H1 (cell line): ENCODE measurements at regions of chr7 and their contacts with region 1.

Region 1: GRCh38 chr7:158885624-158886023 is 29.3 kb downstream of the DYNC2I1 start:
- DNase-seq: no peak
- H3K4me3 ChIP-seq: no peak overlapping the region
- H3K27ac ChIP-seq: no peak overlapping the region
- H3K4me1 ChIP-seq: no peaks in the 10 kb centered on the region
- H3K27me3 ChIP-seq: no peaks in the 10 kb centered on the region
- CTCF ChIP-seq: peak in 1 of 3 experiments; percentile 3; a peak in 2 of 4 replicates
- EP300 ChIP-seq: no peak
- POLR2A ChIP-seq: no peak
- RAD21 ChIP-seq: peak; percentile 32 to 38

Region 2: GRCh38 chr7:158858592-158859503 is 26.8 kb before region 1 on chr7:
- CTCF ChIA-PET with region 1: interaction called, 10 read pairs
- POLR2A ChIA-PET with region 1: no interaction called
- DNase-seq: peak in 1 of 2 experiments; percentile 54
- H3K4me3 ChIP-seq: peak overlapping the region in 2 of 4 experiments; percentile 0 to 49; a peak in 4 of 8 replicates
- H3K27ac ChIP-seq: no peak overlapping the region
- H3K4me1 ChIP-seq: peaks cover 9 to 23% (median 14%) of the 10 kb centered on the region in 4 experiments; a peak in 6 of 7 replicates
- H3K27me3 ChIP-seq: no peaks in the 10 kb centered on the region
- CTCF ChIP-seq: no peak
- EP300 ChIP-seq: no peak
- POLR2A ChIP-seq: peak in 1 of 2 experiments; percentile 28; a peak in 1 of 3 replicates
- RAD21 ChIP-seq: no peak

Region 3: GRCh38 chr7:158903897-158904541 is 18.4 kb after region 1 on chr7:
- CTCF ChIA-PET with region 1: no interaction called
- POLR2A ChIA-PET with region 1: no interaction called
- DNase-seq: no peak
- H3K4me3 ChIP-seq: no peak overlapping the region
- H3K27ac ChIP-seq: no peak overlapping the region
- H3K4me1 ChIP-seq: no peaks in the 10 kb centered on the region; a peak in 1 of 7 replicates
- H3K27me3 ChIP-seq: no peaks in the 10 kb centered on the region
- CTCF ChIP-seq: no peak
- EP300 ChIP-seq: no peak
- POLR2A ChIP-seq: no peak
- RAD21 ChIP-seq: no peak

Region 4: GRCh38 chr7:159158888-159159405 is 273.3 kb after region 1 on chr7:
- CTCF ChIA-PET with region 1: no interaction called
- POLR2A ChIA-PET with region 1: no interaction called
- DNase-seq: no peak
- H3K4me3 ChIP-seq: no peak overlapping the region
- H3K27ac ChIP-seq: no peak overlapping the region
- H3K4me1 ChIP-seq: no peaks in the 10 kb centered on the region
- H3K27me3 ChIP-seq: no peaks in the 10 kb centered on the region
- CTCF ChIP-seq: no peak
- EP300 ChIP-seq: no peak
- POLR2A ChIP-seq: no peak
- RAD21 ChIP-seq: no peak